Calu3 (cell line): ENCODE measurements at regions of chr17 and their contacts with region 1.

Region 1: GRCh38 chr17:48259694-48260291 is 152.2 kb downstream of the SNX11 start:
- DNase-seq: peak; percentile 60
- H3K4me3 Mint-ChIP-seq: no peak overlapping the region
- H3K27ac Mint-ChIP-seq: peak overlapping the region; percentile 73
- H3K4me1 Mint-ChIP-seq: peaks cover 55% of the 10 kb centered on the region
- H3K27me3 Mint-ChIP-seq: no peaks in the 10 kb centered on the region
- CTCF ChIP-seq: peak; percentile 84

Region 2: GRCh38 chr17:48162946-48163506 is 96.8 kb before region 1 on chr17:
- CTCF ChIA-PET with region 1: no interaction called
- intact Hi-C with region 1: loop called (anchors 5 kb)
- DNase-seq: peak; percentile 15
- H3K4me3 Mint-ChIP-seq: peak overlapping the region; percentile 46
- H3K27ac Mint-ChIP-seq: peak overlapping the region; percentile 51
- H3K4me1 Mint-ChIP-seq: peaks cover 18% of the 10 kb centered on the region
- H3K27me3 Mint-ChIP-seq: no peaks in the 10 kb centered on the region
- CTCF ChIP-seq: no peak

Region 3: GRCh38 chr17:48244121-48244711 is 15.6 kb before region 1 on chr17:
- CTCF ChIA-PET with region 1: interaction called, 25 read pairs
- intact Hi-C with region 1: no loop called
- DNase-seq: peak; percentile 61
- H3K4me3 Mint-ChIP-seq: peak overlapping the region; percentile 31
- H3K27ac Mint-ChIP-seq: peak overlapping the region; percentile 72
- H3K4me1 Mint-ChIP-seq: peaks cover 90% of the 10 kb centered on the region
- H3K27me3 Mint-ChIP-seq: no peaks in the 10 kb centered on the region
- CTCF ChIP-seq: no peak

Region 4: GRCh38 chr17:48307814-48308411 is 48.1 kb after region 1 on chr17:
- CTCF ChIA-PET with region 1: interaction called, 56 read pairs
- intact Hi-C with region 1: loop called (anchors 5 kb)
- DNase-seq: peak; percentile 79
- H3K4me3 Mint-ChIP-seq: no peak overlapping the region
- H3K27ac Mint-ChIP-seq: no peak overlapping the region
- H3K4me1 Mint-ChIP-seq: peaks cover 30% of the 10 kb centered on the region
- H3K27me3 Mint-ChIP-seq: no peaks in the 10 kb centered on the region
- CTCF ChIP-seq: peak; percentile 95

Region 5: DNA sequence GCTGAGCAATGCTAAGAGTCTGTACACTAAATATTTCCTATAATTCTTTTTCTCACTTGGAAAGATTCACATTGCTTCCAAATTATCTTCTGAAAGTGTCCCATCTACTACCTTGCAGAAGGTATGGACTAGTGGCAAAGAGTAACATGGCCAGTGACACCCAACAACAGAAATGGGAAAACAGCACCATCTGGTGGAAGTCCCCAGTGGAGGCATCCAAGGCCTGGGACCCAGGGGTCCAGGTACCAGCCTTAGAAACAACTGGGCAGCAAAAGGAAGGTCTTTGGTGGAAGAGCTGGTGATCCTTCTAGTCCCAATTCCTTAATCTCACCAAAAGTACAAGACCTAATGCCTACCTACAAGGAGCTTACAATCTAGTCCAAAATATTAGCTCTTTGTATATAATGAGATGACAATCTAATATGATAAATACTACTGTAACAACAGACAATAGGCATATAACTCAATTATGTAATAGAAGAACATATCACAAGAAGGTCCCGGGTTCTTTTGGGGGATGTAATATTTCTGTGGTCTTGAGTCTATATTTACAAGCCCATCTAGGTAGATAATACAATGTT is 114.9 kb after region 1 on chr17:
- CTCF ChIA-PET with region 1: interaction called, 6 read pairs
- intact Hi-C with region 1: loop called (anchors 1 kb)
- DNase-seq: peak; percentile 80
- H3K4me3 Mint-ChIP-seq: no peak overlapping the region
- H3K27ac Mint-ChIP-seq: no peak overlapping the region
- H3K4me1 Mint-ChIP-seq: no peaks in the 10 kb centered on the region
- H3K27me3 Mint-ChIP-seq: no peaks in the 10 kb centered on the region
- CTCF ChIP-seq: peak; percentile 91

Region 6: GRCh38 chr17:48492401-48493298 is 232.9 kb after region 1 on chr17:
- CTCF ChIA-PET with region 1: no interaction called
- intact Hi-C with region 1: no loop called
- DNase-seq: peak; percentile 90
- H3K4me3 Mint-ChIP-seq: peak overlapping the region; percentile 60
- H3K27ac Mint-ChIP-seq: no peak overlapping the region
- H3K4me1 Mint-ChIP-seq: peaks cover 53% of the 10 kb centered on the region
- H3K27me3 Mint-ChIP-seq: no peaks in the 10 kb centered on the region
- CTCF ChIP-seq: peak; percentile 96

Region 7: DNA sequence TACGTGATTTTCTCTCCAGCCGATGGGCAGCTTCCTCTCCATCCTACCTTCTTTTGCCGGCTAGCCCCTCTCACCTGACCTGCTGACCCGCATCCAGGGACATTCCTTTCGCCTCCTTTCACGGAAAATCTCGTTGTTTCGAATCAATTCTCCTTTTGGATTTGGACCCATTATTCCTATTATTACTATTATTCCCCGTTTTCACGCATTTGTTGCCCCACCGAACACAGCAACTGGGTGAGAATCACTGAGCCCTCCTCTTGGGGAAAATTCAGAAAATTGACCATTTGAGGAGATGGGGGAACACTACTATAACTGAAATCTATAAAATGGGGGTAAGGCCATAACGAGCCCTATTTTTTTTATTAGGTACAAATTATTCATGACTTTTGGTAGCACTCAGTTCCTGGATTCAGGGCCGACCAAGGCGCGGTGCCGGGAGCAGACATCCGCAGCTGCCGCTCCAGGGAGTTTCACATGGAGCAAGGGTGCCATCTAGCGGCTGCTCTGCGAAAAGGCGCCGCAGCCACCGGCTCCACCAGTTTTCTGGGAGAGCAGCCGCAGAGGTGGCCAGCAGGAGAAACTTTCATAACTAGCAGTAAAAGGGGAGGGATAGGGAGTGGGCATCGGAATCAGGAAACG is 358.6 kb after region 1 on chr17:
- CTCF ChIA-PET with region 1: interaction called, 13 read pairs
- intact Hi-C with region 1: loop called (anchors 1 kb)
- DNase-seq: peak; percentile 98
- H3K4me3 Mint-ChIP-seq: peak overlapping the region; percentile 88
- H3K27ac Mint-ChIP-seq: peak overlapping the region; percentile 74
- H3K4me1 Mint-ChIP-seq: peaks cover 71% of the 10 kb centered on the region
- H3K27me3 Mint-ChIP-seq: peaks cover 88% of the 10 kb centered on the region
- CTCF ChIP-seq: peak; percentile 100